MCF 10A (cell line): ENCODE measurements at regions of chr1 and their contacts with region 1.

Region 1: DNA sequence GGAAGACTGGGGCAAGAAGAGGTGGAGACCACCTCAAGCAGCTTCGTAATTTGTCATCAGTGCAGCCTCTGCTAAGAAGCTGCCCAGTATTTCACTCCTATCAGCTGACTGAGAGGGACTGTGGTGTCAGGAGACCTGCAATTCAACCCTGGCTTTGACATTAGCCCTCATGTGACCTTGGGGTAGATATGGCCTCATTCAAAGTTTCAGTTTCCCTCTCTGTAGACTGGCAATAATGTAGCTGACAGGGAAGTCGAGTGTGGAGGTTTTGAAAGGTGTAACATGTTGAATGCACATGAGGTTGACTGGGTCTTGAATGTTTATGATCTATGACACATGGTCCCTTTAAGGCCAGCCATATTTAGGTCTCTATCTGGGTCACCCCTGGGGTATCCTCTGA is 2.2 kb upstream of the SPRR4 start:
- DNase-seq: no peak
- H3K4me3 Mint-ChIP-seq: no peak overlapping the region
- H3K27ac Mint-ChIP-seq: no peak overlapping the region
- H3K4me1 Mint-ChIP-seq: peaks cover 21% of the 10 kb centered on the region
- H3K27me3 Mint-ChIP-seq: no peaks in the 10 kb centered on the region
- CTCF ChIP-seq: no peak

Region 2: GRCh38 chr1:152932170-152932811 is 36.0 kb before region 1 on chr1:
- CTCF ChIA-PET with region 1: interaction called, 5 read pairs
- POLR2A ChIA-PET with region 1: interaction called, 15 read pairs
- intact Hi-C with region 1: no loop called
- DNase-seq: peak; percentile 89
- H3K4me3 Mint-ChIP-seq: no peak overlapping the region
- H3K27ac Mint-ChIP-seq: peak overlapping the region; percentile 14
- H3K4me1 Mint-ChIP-seq: peaks cover 25% of the 10 kb centered on the region
- H3K27me3 Mint-ChIP-seq: no peaks in the 10 kb centered on the region
- CTCF ChIP-seq: no peak

Region 3: GRCh38 chr1:152983743-152984142 is 15.5 kb after region 1 on chr1 and contains the start of gene SPRR1A:
- CTCF ChIA-PET with region 1: interaction called, 9 read pairs
- POLR2A ChIA-PET with region 1: interaction called, 14 read pairs
- intact Hi-C with region 1: no loop called
- DNase-seq: peak; percentile 70
- H3K4me3 Mint-ChIP-seq: no peak within 1 kb of the TSS
- H3K27ac Mint-ChIP-seq: no peak within 1 kb of the TSS
- H3K4me1 Mint-ChIP-seq: peaks cover 5% of the 10 kb centered on the region
- H3K27me3 Mint-ChIP-seq: no peaks in the 10 kb centered on the region
- CTCF ChIP-seq: no peak
- total RNA-seq, gene SPRR1A: not detected in 2 replicates

Region 4: GRCh38 chr1:153001382-153001781 is 33.1 kb after region 1 on chr1 and contains the start of gene SPRR3:
- CTCF ChIA-PET with region 1: no interaction called
- POLR2A ChIA-PET with region 1: no interaction called
- intact Hi-C with region 1: no loop called
- DNase-seq: no peak
- H3K4me3 Mint-ChIP-seq: no peak within 1 kb of the TSS
- H3K27ac Mint-ChIP-seq: peak within 1 kb of the TSS; percentile 0
- H3K4me1 Mint-ChIP-seq: peaks cover 16% of the 10 kb centered on the region
- H3K27me3 Mint-ChIP-seq: no peaks in the 10 kb centered on the region
- CTCF ChIP-seq: no peak
- total RNA-seq, gene SPRR3: not detected in 2 replicates